ENCODE measurements at regions of chr17 and their contacts with region 1.

Region 1: GRCh38 chr17:68771867-68772515 is 170.8 kb upstream of the FAM20A start:
- DNase-seq: no peak
- ATAC-seq: peak; percentile 86
- H3K4me3 ChIP-seq: peak overlapping the region; percentile 16
- H3K27ac ChIP-seq: no peak overlapping the region
- H3K4me1 ChIP-seq: no peaks in the 10 kb centered on the region
- H3K27me3 ChIP-seq: no peaks in the 10 kb centered on the region
- CTCF ChIP-seq: peak; percentile 60

Region 2: DNA sequence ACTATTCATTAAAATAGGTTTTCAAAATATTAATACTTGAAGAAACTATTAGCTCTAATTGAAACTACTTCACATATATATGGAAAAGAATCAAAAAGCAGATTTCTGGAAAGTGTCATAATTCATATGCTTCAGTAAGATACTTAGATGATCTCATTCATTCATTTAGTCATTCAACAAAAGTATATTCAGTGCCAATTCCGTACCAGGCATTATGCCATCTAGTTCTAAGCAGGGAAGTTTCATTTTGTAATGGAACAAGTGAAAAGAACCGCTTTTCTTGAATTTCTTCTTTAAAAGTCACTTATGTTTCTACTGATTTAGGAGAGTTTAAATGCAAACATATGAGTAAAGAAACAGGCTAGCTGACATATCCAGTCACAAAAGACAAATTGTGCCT is 52.6 kb before region 1 on chr17:
- intact Hi-C with region 1: no loop called
- DNase-seq: no peak
- ATAC-seq: no peak
- H3K4me3 ChIP-seq: no peak overlapping the region
- H3K27ac ChIP-seq: no peak overlapping the region
- H3K4me1 ChIP-seq: no peaks in the 10 kb centered on the region
- H3K27me3 ChIP-seq: no peaks in the 10 kb centered on the region
- CTCF ChIP-seq: no peak

Region 3: DNA sequence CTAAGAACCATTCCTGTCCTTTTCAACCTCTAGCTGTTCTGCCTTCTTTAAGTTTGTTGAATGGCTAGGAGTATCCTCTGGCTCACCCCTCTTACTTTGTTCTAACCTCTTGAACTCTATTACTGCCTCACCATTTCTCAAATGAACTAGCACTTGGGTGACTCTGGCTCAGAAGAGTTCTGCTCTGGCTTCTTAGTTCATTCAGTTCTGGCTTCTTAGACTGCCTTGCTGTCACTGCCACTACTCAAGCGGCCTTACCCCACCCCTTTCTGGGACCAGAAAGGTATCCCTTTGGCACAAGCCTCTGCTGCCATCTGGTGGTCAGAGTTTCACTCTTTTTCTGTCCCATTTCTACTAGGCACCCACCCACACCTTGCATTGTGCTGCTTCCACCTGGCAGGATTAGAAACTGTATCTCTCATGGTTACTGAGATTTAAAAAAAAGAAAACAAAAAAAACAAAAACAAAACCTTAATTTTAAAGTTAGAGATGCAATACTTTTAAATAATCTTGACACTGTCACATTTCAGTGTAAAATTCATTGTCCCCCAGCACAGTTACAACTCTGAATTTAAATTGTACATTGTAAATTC is 463.4 kb after region 1 on chr17:
- intact Hi-C with region 1: loop called (anchors 10 kb)
- DNase-seq: peak; percentile 67
- ATAC-seq: peak; percentile 97
- H3K4me3 ChIP-seq: no peak overlapping the region
- H3K27ac ChIP-seq: no peak overlapping the region
- H3K4me1 ChIP-seq: no peaks in the 10 kb centered on the region
- H3K27me3 ChIP-seq: no peaks in the 10 kb centered on the region
- CTCF ChIP-seq: peak; percentile 70